Calu3 (cell line): ENCODE measurements at regions of chr18 and their contacts with region 1.

Region 1: GRCh38 chr18:32668956-32669355 is 103.9 kb downstream of the KLHL14 start:
- DNase-seq: no peak
- H3K4me3 Mint-ChIP-seq: no peak overlapping the region
- H3K27ac Mint-ChIP-seq: no peak overlapping the region
- H3K4me1 Mint-ChIP-seq: no peaks in the 10 kb centered on the region
- H3K27me3 Mint-ChIP-seq: no peaks in the 10 kb centered on the region
- CTCF ChIP-seq: no peak

Region 2: GRCh38 chr18:32698153-32698552 is 29.2 kb after region 1 on chr18:
- CTCF ChIA-PET with region 1: no interaction called
- intact Hi-C with region 1: loop called (anchors 1 kb)
- DNase-seq: no peak
- H3K4me3 Mint-ChIP-seq: no peak overlapping the region
- H3K27ac Mint-ChIP-seq: no peak overlapping the region
- H3K4me1 Mint-ChIP-seq: peaks cover 16% of the 10 kb centered on the region
- H3K27me3 Mint-ChIP-seq: no peaks in the 10 kb centered on the region
- CTCF ChIP-seq: no peak